ENCODE measurements at regions of chr2 and their contacts with region 1.

Region 1: DNA sequence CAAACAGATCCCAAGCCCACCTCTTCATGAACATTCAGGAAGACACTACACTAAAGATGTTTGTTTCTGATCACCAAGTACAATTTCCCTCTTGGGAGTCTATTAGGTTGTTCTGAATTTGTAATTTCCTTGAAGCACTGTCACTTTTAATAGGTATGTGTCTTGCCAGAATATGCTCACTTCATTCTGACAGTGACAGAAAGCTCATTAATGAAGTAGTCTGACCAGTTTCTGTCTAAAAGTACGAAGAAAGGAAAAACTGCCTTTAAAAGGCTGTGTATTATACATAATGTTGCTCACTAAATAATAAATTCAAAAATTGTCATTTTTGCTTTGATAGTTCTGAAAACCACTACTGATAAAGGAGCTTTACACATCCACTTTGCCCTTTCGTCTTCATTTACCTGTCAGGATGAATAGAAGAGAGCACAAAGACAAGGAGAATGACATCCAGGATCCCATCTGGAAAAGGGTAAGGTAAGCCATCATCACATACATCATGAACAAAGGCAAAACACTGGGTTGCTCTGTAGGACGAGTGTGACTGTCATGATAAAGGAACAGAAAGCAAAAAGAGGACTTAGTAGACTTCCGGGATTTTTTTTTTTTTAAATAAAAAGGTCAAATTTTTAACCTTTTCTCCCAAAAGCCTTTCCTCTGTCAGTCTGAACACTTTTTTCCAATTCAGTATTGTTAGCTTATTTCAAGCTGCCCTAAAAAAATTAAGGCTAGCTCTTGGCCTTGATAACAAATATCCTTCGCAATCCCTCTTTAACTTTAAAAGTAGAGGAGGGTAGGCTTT is 103.4 kb downstream of the METTL8 start:
- DNase-seq: no peak
- ATAC-seq: no peak
- H3K4me3 ChIP-seq: no peak overlapping the region
- H3K27ac ChIP-seq: no peak overlapping the region
- H3K4me1 ChIP-seq: peaks cover 3% of the 10 kb centered on the region; the same call in 1 of the 2 replicates
- H3K27me3 ChIP-seq: no peaks in the 10 kb centered on the region
- CTCF ChIP-seq: no peak
- POLR2A ChIP-seq: no peak
- RAD21 ChIP-seq: no peak

Region 2: GRCh38 chr2:171319164-171319810 is 11.1 kb before region 1 on chr2:
- CTCF ChIA-PET with region 1: interaction called, 4 read pairs
- POLR2A ChIA-PET with region 1: interaction called, 10 read pairs
- dilution Hi-C with region 1: no loop called
- in situ Hi-C with region 1: no loop called
- intact Hi-C with region 1: no loop called
- DNase-seq: peak; percentile 68
- ATAC-seq: peak; percentile 28
- H3K4me3 ChIP-seq: no peak overlapping the region
- H3K27ac ChIP-seq: no peak overlapping the region
- H3K4me1 ChIP-seq: peaks cover 8% of the 10 kb centered on the region
- H3K27me3 ChIP-seq: no peaks in the 10 kb centered on the region
- CTCF ChIP-seq: no peak
- POLR2A ChIP-seq: no peak
- RAD21 ChIP-seq: no peak

Region 3: GRCh38 chr2:171469176-171469575 is 138.8 kb after region 1 on chr2:
- CTCF ChIA-PET with region 1: no interaction called
- POLR2A ChIA-PET with region 1: no interaction called
- dilution Hi-C with region 1: no loop called
- in situ Hi-C with region 1: no loop called
- intact Hi-C with region 1: no loop called
- DNase-seq: peak; percentile 11
- ATAC-seq: no peak
- H3K4me3 ChIP-seq: no peak overlapping the region
- H3K27ac ChIP-seq: no peak overlapping the region
- H3K4me1 ChIP-seq: no peaks in the 10 kb centered on the region
- H3K27me3 ChIP-seq: no peaks in the 10 kb centered on the region
- CTCF ChIP-seq: no peak
- POLR2A ChIP-seq: no peak
- RAD21 ChIP-seq: no peak

Measured in IMR-90 (cell line).